GM10248 (cell line): ENCODE measurements at regions of chr2 and their contacts with region 1.

Region 1: DNA sequence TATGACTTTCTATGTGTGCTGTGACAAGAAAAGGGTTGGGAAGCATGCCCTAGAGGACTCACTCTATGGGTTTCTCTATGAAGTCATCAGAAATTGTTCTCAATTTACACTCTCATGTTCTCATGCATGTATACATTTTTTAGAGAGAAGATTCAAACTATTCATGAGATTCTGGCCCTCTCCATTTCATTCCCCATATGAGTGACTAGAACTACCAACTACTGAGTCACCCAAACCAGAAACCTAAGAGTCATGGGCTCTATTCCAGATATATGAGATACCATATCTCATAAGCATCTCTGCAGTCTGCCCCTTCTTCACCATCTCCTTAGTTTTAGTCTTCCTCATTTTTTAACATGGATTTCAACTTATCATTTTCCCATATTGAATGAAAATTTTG is 87.7 kb downstream of the EXOC6B start:
- DNase-seq: no peak
- CTCF ChIP-seq: no peak

Region 2: GRCh38 chr2:72579591-72580180 is 158.4 kb before region 1 on chr2:
- CTCF ChIA-PET with region 1: no interaction called
- POLR2A ChIA-PET with region 1: interaction called, 10 read pairs
- DNase-seq: peak; percentile 18
- CTCF ChIP-seq: peak; percentile 41

Region 3: DNA sequence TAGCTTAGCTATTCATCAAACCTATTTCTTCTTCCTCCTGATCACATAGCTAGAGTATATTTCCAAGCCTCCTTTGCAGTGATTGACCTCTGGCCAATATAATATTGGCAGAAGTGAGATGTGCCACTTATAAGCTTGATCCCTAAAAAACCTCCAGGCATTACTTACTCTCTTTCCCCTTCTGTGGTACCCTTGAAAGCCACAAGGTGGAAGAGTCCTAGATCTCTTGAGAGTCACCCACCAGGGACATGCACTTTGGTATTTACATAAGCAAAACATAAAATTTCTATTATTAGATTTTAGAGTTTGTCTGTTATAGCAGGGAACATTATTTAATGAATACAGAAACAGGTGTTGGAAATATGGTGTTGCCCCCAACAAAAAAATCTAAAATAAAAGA is 24.2 kb before region 1 on chr2:
- CTCF ChIA-PET with region 1: no interaction called
- POLR2A ChIA-PET with region 1: no interaction called
- DNase-seq: no peak
- CTCF ChIP-seq: no peak

Region 4: DNA sequence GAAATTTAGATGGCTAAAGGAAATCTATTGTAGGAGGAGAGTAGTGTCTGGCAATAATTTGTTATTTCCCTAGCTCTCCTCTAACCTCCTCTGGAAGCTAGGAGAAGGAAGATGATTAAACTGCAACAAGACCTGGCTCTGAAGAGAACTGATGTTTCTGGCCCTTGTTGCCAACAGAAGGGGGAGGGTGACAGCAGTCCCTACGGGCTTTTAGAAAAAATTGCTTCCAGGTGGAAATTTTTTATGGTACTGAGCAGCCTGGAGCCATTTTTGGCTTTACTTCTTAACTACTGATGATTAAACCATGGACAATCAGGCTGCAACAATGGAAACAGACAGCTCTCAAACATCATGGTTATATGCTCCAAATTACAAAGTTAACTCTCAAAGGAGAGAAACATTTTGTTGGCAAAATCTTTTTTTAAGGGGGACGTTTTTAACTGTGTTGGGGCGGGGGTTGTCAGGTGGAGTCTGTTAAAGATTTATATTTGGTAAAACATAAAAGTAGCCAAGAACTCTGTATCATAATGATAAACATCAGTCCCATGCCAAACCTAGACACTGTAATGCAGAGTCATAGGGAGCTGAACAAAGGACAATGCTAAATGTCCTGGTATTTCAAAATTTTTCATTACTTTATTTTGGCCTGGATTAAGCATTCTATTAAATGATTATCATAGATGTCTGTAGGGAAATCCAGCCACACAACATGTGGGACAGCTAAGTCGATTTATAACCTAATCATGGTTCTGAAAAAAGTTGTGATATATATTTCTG is 17.7 kb after region 1 on chr2:
- CTCF ChIA-PET with region 1: no interaction called
- POLR2A ChIA-PET with region 1: no interaction called
- DNase-seq: no peak
- CTCF ChIP-seq: no peak